ENCODE measurements at regions of chr1 and their contacts with region 1.

Region 1: DNA sequence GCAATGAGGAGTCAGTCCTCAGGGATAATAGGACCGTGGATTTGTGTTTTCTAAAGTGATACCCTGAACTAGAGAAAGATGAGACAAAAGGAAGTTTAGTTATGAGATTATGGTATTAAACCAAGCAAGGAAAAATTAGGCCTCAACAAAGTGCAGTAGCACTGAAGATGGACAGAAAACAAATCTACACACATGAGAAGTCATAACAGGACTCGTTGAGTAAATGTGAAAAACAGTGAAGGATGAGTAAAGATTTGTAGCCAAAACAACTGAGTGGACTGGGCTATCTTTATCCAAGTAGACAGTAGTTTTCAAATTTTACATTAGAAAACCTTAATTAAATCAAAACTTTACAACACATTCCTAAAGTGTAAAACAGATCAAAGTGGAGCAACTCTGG is 15.0 kb downstream of the EPRS1 start:
- DNase-seq: no peak
- H3K4me3 ChIP-seq: no peak overlapping the region
- H3K27ac ChIP-seq: no peak overlapping the region
- H3K4me1 ChIP-seq: no peaks in the 10 kb centered on the region
- H3K27me3 ChIP-seq: no peaks in the 10 kb centered on the region
- CTCF ChIP-seq: no peak

Region 2: GRCh38 chr1:219621047-219621786 is 410.1 kb before region 1 on chr1:
- intact Hi-C with region 1: no loop called
- DNase-seq: no peak
- H3K4me3 ChIP-seq: no peak overlapping the region
- H3K27ac ChIP-seq: no peak overlapping the region
- H3K4me1 ChIP-seq: no peaks in the 10 kb centered on the region
- H3K27me3 ChIP-seq: no peaks in the 10 kb centered on the region
- CTCF ChIP-seq: no peak

Region 3: GRCh38 chr1:219988387-219988786 is 42.9 kb before region 1 on chr1:
- intact Hi-C with region 1: loop called (anchors 10 kb)
- DNase-seq: no peak
- H3K4me3 ChIP-seq: no peak overlapping the region
- H3K27ac ChIP-seq: no peak overlapping the region
- H3K4me1 ChIP-seq: peaks cover 0 to 6% (median 2%) of the 10 kb centered on the region in 4 donors
- H3K27me3 ChIP-seq: no peaks in the 10 kb centered on the region
- CTCF ChIP-seq: no peak